Kidney (tissue), 22 donors: ENCODE measurements at regions of chr2 and their contacts with region 1.

Region 1: DNA sequence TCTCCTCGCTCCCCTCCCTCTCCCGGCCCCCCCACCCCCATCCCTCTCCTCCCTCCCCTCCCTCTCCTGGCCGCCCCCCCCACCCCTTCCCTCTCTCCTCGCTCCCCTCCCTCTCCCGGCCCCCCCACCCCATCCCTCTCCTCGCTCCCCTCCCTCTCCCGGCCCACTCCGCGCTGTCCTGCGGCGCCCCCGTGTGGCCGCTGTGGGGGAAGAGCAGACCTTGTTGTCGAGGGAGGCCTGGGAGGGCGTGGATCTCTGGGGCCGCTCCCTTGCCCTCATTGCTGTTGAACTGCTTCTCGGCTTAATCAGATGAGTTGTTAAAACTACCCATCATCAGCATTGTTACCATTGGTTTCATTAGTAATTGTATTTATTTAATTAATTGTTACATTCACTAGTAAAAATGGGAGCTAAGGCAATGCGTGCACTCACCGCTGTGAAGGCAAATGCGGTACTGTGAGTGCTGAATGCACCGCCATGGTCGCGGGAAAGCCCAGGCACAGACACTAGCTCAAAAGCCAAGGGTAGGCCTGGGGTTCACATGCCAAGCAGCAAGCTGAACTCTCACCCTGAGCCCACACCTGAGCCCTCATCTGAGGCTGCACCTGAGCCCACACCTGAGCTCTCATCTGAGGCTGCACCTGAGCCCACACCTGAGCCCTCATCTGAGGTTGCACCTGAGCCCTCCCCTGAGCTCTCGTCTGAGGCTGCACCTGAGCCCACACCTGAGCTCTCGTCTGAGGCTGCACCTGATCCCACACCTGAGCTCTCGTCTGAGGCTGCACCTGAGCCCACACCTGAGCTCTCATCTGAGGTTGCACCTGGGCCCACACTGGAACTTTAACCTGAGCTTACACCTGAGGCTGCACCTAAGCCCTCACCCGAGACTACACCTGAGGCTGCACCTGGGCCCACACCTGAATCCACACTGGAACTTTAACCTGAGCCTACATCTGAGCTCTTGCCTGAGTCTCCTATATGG is 8.8 kb downstream of the RTP5 start:
- DNase-seq: peak; percentile 67 to 89 (median 89)
- H3K4me3 ChIP-seq: no peak overlapping the region
- H3K27ac ChIP-seq: no peak overlapping the region
- H3K4me1 ChIP-seq: peaks cover 0 to 13% (median 4%) of the 10 kb centered on the region in 3 donors
- H3K27me3 ChIP-seq: no peaks in the 10 kb centered on the region
- CTCF ChIP-seq: peak; percentile 82

Region 2: DNA sequence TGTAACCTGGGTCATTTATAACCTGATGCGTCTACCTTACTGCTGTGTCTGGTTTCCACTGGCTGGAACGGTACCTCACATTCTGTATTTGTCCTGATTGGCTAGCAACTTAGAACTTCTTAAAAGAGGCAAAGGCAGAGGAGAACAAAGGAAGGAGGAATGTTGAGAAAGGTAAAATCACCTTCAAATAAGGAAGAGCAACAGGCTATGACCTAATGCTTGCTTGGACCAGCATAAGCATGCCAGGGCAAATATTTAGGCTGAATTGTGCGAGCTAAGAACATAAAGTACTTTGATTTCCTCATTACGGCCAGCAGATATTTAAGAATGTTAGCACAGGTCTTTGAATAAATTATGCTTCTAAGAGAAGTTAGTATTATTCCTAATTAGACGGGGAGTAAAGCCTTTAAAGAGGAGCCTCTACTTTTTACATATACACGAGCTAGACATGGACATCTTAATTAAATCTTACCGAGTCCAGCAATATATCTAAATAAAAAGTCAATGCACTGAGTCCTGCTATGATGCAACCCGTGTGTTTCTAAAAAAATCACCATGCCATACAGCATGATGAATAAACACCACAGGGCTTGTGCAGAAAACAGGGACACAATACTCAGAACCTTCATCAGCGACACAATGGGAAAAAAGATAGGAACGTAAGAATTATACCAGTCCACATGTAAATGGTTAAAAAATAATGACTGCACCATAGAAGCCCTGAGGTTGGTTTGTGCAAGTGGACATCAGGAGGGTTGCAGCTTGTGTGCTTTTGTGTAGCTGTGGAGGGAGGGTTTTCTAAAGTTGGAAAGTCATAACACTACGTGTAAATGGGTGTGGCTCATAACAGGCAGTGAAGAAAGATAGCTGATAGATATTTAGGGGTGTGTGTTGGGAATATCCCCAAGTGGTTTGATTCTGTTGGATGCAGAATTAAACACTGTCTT is 548.3 kb before region 1 on chr2:
- intact Hi-C with region 1: no loop called
- DNase-seq: no peak
- H3K4me3 ChIP-seq: no peak overlapping the region
- H3K27ac ChIP-seq: no peak overlapping the region
- H3K4me1 ChIP-seq: no peaks in the 10 kb centered on the region
- H3K27me3 ChIP-seq: no peaks in the 10 kb centered on the region
- CTCF ChIP-seq: no peak

Region 3: GRCh38 chr2:241734467-241735208 is 143.6 kb before region 1 on chr2 and contains the start of gene D2HGDH:
- intact Hi-C with region 1: loop called (anchors 10 kb)
- DNase-seq: peak; percentile 89 to 98 (median 93)
- H3K4me3 ChIP-seq: peak within 1 kb of the TSS; percentile 50 to 75 (median 68)
- H3K27ac ChIP-seq: peak within 1 kb of the TSS; percentile 93 to 95
- H3K4me1 ChIP-seq: peaks cover 0 to 5% (median 0%) of the 10 kb centered on the region in 3 donors
- H3K27me3 ChIP-seq: no peaks in the 10 kb centered on the region
- CTCF ChIP-seq: no peak
- total RNA-seq, gene D2HGDH: 37.0 TPM

Region 4: DNA sequence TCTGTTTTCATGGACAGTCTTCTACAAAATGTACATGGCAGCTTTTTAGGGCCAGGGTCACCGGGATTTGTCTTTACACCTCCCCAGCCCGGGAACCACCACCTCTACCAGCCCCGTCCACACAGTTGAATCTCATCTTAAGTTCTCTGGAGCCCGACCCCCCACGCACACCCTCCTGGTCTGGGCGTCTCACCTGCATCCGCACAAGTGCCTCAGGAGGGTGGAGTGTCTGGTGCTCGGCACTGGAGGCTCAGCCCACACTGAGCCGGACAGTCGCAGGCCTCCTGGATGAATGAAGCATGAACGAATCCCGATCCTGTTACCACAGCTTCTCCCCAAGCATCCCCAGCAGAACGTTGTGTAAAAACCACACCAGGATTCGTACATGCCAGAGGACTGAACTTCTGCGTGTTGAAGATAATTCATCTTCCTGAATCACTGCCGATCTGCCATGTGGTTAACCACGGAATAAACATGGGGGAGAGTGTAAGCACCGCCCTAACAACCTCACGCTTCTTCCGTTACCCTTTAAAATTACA is 153.3 kb after region 1 on chr2:
- intact Hi-C with region 1: no loop called
- DNase-seq: peak in 3 of 5 donors; percentile 17 to 24 (median 22)
- H3K4me3 ChIP-seq: no peak overlapping the region
- H3K27ac ChIP-seq: no peak overlapping the region
- H3K4me1 ChIP-seq: no peaks in the 10 kb centered on the region
- H3K27me3 ChIP-seq: no peaks in the 10 kb centered on the region
- CTCF ChIP-seq: no peak